Activated B cell treated with CpG ODN at 0.5 μM for 24 hours (primary cell): ENCODE measurements at regions of chr16 and their contacts with region 1.

Region 1: DNA sequence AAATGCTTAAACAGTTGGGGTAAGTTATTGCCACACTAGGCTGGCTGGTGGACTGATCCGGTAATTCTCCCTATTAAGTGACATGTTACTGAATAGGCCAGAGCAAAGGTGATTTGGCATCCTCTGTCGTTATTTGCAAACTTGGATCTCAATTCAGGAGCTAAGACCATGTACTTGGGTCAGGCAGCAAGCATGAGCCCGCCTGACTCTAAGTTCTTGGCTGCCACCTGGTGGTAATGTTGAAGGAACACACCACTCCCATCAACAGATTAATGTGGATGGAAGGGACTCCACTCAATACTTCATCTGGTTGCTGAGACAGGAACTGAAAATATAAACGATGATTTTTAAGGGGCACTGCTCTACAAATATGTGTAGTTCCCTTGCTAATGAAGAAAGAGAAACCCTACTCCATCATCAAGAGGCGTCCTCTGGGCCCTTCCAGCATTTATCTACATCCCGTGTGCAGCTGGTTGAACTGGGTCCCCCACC is 70.8 kb downstream of the EMP2 start:
- DNase-seq: no peak
- ATAC-seq: peak; percentile 96
- H3K4me3 Mint-ChIP-seq: no peak overlapping the region
- H3K27ac Mint-ChIP-seq: peak overlapping the region; percentile 19
- H3K4me1 Mint-ChIP-seq: peaks cover 17% of the 10 kb centered on the region
- H3K27me3 Mint-ChIP-seq: no peaks in the 10 kb centered on the region
- CTCF ChIP-seq: peak; percentile 58

Region 2: DNA sequence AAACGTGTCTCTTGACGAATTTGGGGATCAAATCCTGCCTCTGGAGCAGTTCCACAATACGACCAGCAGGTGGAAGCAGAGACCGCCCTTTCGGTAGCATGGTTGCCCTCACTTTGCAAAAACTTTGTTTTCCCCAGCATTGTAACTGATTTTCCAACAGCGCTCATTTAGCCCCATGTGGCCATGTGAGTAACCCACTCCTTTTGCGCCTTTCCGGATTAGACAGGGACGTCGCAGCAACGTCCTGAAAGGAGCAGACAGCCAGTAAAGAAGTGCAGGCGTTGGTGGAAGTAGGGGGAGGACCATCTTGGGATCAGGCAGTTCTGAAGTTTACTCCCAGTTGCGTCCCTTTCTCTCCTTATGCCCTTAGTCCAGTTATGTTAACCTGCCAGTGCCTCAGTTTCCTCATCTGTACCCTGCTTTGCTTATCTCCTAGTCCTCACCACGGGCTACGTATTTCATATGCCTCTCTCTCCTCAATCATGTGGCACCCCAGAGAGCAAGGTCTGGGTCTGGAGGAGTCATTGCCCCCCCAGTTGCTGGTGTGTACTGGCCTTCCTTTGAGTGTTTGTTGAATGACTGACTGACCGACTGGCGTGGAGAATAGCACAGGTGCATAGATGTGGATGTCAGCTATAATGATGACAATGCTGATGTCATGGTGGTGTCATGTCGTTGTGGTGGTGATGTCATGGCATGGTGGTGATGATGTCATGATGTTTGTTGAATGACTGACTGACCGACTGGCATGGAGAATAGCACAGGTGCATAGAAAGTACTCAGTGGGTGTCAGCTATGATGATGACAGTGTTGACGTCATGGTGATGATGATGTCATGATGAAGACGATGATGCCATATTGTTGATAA is 1941.6 kb before region 1 on chr16:
- CTCF ChIA-PET with region 1: no interaction called
- POLR2A ChIA-PET with region 1: no interaction called
- intact Hi-C with region 1: loop called (anchors 1 kb)
- DNase-seq: peak; percentile 64
- ATAC-seq: peak; percentile 94
- H3K4me3 Mint-ChIP-seq: no peak overlapping the region
- H3K27ac Mint-ChIP-seq: no peak overlapping the region
- H3K4me1 Mint-ChIP-seq: peaks cover 3% of the 10 kb centered on the region
- H3K27me3 Mint-ChIP-seq: peaks cover 8% of the 10 kb centered on the region
- CTCF ChIP-seq: peak; percentile 88

Region 3: DNA sequence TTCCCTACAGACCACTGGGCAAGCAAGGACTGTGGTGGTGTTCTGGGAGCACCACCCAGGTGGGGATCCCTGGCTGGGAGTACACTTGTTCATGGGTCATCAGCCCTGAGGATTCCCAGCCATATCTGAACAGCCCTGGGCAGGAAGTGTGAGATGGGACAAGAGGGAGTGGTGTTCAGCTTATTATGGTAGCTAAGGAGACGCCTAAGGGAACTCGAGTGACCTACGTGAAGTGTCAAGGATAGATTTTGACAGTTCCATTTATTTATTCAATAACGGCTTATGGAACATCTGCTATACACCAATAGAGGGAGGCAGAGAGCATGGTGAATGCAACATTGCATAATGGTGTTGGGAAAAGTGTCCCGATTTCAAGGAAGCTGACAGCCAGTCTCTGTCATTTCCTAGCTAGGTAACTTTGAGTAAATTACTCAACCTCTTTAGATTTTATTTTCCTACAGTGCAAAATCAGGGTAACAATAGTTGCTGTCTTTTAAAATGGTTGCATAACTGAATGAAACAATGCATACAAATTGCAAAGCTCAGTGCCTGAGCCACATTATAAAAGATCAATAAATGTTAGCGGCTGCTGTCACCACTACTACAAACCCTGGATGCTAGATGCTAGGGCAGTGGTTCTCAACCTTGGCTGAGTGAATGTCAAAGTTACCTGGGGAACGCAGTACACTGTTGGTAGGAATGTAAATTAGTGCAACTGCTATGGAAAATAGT is 861.4 kb before region 1 on chr16:
- CTCF ChIA-PET with region 1: no interaction called
- POLR2A ChIA-PET with region 1: no interaction called
- intact Hi-C with region 1: loop called (anchors 2 kb)
- DNase-seq: no peak
- ATAC-seq: no peak
- H3K4me3 Mint-ChIP-seq: no peak overlapping the region
- H3K27ac Mint-ChIP-seq: no peak overlapping the region
- H3K4me1 Mint-ChIP-seq: no peaks in the 10 kb centered on the region
- H3K27me3 Mint-ChIP-seq: peaks cover 16% of the 10 kb centered on the region
- CTCF ChIP-seq: no peak

Region 4: GRCh38 chr16:10256784-10257641 is 252.6 kb before region 1 on chr16:
- CTCF ChIA-PET with region 1: interaction called, 116 read pairs
- POLR2A ChIA-PET with region 1: interaction called, 3 read pairs
- intact Hi-C with region 1: loop called (anchors 1 kb)
- DNase-seq: peak; percentile 56
- ATAC-seq: peak; percentile 83
- H3K4me3 Mint-ChIP-seq: peak overlapping the region; percentile 71
- H3K27ac Mint-ChIP-seq: peak overlapping the region; percentile 47
- H3K4me1 Mint-ChIP-seq: peaks cover 42% of the 10 kb centered on the region
- H3K27me3 Mint-ChIP-seq: no peaks in the 10 kb centered on the region
- CTCF ChIP-seq: no peak

Region 5: GRCh38 chr16:10314811-10315210 is 194.8 kb before region 1 on chr16:
- CTCF ChIA-PET with region 1: interaction called, 52 read pairs
- POLR2A ChIA-PET with region 1: interaction called, 9 read pairs
- intact Hi-C with region 1: loop called (anchors 1 kb)
- DNase-seq: no peak
- ATAC-seq: no peak
- H3K4me3 Mint-ChIP-seq: no peak overlapping the region
- H3K27ac Mint-ChIP-seq: peak overlapping the region; percentile 63
- H3K4me1 Mint-ChIP-seq: peaks cover 22% of the 10 kb centered on the region
- H3K27me3 Mint-ChIP-seq: no peaks in the 10 kb centered on the region
- CTCF ChIP-seq: no peak

Region 6: GRCh38 chr16:10731790-10732189 is 222.2 kb after region 1 on chr16:
- CTCF ChIA-PET with region 1: interaction called, 137 read pairs
- POLR2A ChIA-PET with region 1: interaction called, 31 read pairs
- intact Hi-C with region 1: no loop called
- DNase-seq: no peak
- ATAC-seq: no peak
- H3K4me3 Mint-ChIP-seq: no peak overlapping the region
- H3K27ac Mint-ChIP-seq: no peak overlapping the region
- H3K4me1 Mint-ChIP-seq: no peaks in the 10 kb centered on the region
- H3K27me3 Mint-ChIP-seq: no peaks in the 10 kb centered on the region
- CTCF ChIP-seq: no peak

Region 7: DNA sequence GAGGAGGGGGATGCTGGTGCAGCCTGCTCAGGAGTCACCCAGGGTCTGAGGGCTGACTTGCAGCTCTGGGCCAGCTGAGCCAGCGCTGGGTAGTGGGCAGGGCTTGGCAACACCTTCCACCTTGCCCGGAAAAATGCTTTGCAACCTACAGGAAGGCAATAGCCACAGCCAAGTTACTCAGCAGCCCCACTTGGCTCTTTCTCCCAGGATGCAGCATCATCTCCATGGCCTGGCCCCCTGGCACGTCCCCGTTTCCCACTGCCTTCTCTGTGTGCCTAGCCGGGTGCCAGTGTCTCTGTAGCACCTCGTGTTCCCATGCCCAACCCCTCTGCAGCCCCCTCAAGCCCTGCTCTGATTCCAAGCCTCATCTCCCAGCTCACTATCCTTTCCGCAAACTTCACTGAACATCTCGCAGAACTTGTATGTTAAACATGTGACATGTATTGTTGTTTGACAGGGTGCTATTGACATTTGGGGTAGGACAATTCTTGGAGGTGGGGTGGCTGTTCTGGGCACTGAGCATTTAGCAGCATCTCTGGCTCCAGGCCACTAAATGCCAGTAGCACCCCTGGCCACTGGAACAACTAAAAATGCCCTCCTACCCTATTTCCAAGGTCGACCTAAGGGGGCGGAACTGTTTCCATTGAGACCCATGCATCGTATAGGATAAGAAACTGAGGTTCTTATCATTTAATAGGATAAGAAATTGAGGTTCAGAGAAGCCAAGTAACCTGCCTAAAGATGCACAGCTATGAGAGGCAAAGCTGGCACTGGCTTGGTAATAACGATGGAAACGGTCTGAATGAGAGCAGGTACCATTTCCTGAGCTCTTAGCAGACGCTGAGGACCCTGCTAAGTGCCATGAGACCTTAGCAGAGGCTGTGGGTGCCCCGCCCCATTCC is 420.5 kb after region 1 on chr16:
- CTCF ChIA-PET with region 1: interaction called, 8 read pairs
- POLR2A ChIA-PET with region 1: interaction called, 3 read pairs
- intact Hi-C with region 1: loop called (anchors 5 kb)
- DNase-seq: no peak
- ATAC-seq: peak; percentile 14
- H3K4me3 Mint-ChIP-seq: peak overlapping the region; percentile 5
- H3K27ac Mint-ChIP-seq: peak overlapping the region; percentile 71
- H3K4me1 Mint-ChIP-seq: peaks cover 54% of the 10 kb centered on the region
- H3K27me3 Mint-ChIP-seq: no peaks in the 10 kb centered on the region
- CTCF ChIP-seq: no peak